HepG2 (cell line): ENCODE measurements at regions of chr4 and their contacts with region 1.

Region 1: DNA sequence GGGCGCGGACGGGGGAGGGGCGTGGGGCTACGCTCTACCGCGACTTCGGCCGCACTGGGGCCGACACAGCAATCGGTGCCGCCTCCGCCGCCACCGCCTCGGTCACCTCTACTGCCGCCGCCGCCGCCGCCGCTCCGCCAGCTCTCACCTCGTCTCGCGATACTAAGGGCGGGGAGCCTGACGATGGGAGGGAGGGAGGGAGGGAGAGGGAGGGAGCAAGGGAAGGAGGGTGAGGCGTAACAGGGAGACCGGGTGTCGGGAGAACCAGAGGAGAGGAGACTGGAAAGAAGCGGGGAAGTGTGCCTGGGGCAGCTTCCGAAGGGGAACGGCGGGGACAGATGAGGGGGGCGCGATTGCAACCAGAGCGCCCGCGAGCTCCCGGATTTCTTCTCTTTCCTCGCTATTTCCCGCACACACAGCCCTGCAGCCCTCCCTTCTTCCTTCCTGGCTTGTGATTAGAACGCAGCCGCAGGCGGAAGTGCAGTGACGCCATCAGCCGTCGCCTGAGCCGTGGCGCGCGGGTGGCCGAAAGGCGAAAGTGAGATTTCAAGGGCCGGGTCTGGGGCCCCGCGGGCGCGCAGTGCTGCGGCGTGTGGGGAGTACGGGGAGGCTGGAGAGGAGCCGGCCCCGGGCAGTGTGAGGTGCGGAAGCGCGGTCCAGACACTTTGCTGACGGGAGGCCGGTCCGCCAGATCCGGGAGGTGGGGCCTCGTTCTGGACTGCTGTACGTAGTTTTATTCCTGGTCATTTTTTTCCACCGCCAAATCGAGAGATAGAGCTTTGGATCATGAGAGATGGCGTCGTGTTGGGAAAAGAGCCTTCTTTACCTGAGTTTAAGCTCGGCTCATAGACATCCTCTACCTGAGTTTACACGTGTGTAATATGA is at the start of gene ANKRD17:
- DNase-seq: peak; percentile 89
- ATAC-seq: peak; percentile 89
- H3K4me3 ChIP-seq: peak within 1 kb of the TSS; percentile 82 to 93 (median 83)
- H3K27ac ChIP-seq: peak within 1 kb of the TSS; percentile 99
- H3K4me1 ChIP-seq: peaks cover 45% of the 10 kb centered on the region
- H3K27me3 ChIP-seq: no peaks in the 10 kb centered on the region; a peak in 1 of 5 replicates
- CTCF ChIP-seq: peak; percentile 26; the same call in 1 of the 2 replicates
- EP300 ChIP-seq: peak in 1 of 2 experiments; percentile 55; a peak in 1 of 4 replicates
- POLR2A ChIP-seq: peak; percentile 88 to 96
- RAD21 ChIP-seq: peak; percentile 50
- total RNA-seq, gene ANKRD17: 61.1 and 97.9 TPM in 2 replicates

Region 2: GRCh38 chr4:73069338-73070073 is 189.4 kb before region 1 on chr4 and contains the start of gene COX18:
- CTCF ChIA-PET with region 1: no interaction called
- POLR2A ChIA-PET with region 1: interaction called, 20 read pairs
- in situ Hi-C with region 1: no loop called
- intact Hi-C with region 1: loop called (anchors 2 kb)
- DNase-seq: peak; percentile 95
- ATAC-seq: peak; percentile 91
- H3K4me3 ChIP-seq: peak within 1 kb of the TSS; percentile 79 to 83 (median 81)
- H3K27ac ChIP-seq: peak within 1 kb of the TSS; percentile 95
- H3K4me1 ChIP-seq: peaks cover 23% of the 10 kb centered on the region
- H3K27me3 ChIP-seq: no peaks in the 10 kb centered on the region; a peak in 1 of 5 replicates
- CTCF ChIP-seq: peak; percentile 29; the same call in 1 of the 2 replicates
- EP300 ChIP-seq: 0 out of 4 replicates have a peak, but pooled peaks of 1 of the 2 experiments have one; percentile 15
- POLR2A ChIP-seq: peak; percentile 93 to 95
- RAD21 ChIP-seq: peak; percentile 72; the same call in 1 of the 2 replicates
- total RNA-seq, gene COX18: 21.3 and 25.3 TPM in 2 replicates

Region 3: GRCh38 chr4:73103799-73104503 is 155.0 kb before region 1 on chr4:
- CTCF ChIA-PET with region 1: no interaction called
- POLR2A ChIA-PET with region 1: interaction called, 13 read pairs
- in situ Hi-C with region 1: no loop called
- intact Hi-C with region 1: no loop called
- DNase-seq: peak; percentile 93
- ATAC-seq: peak; percentile 90
- H3K4me3 ChIP-seq: peak overlapping the region; percentile 30 to 62 (median 59)
- H3K27ac ChIP-seq: peak overlapping the region; percentile 83
- H3K4me1 ChIP-seq: peaks cover 31% of the 10 kb centered on the region
- H3K27me3 ChIP-seq: no peaks in the 10 kb centered on the region
- CTCF ChIP-seq: no peak
- EP300 ChIP-seq: peak in 1 of 2 experiments; percentile 48; a peak in 1 of 4 replicates
- POLR2A ChIP-seq: peak; percentile 59 to 75
- RAD21 ChIP-seq: no peak

Region 4: DNA sequence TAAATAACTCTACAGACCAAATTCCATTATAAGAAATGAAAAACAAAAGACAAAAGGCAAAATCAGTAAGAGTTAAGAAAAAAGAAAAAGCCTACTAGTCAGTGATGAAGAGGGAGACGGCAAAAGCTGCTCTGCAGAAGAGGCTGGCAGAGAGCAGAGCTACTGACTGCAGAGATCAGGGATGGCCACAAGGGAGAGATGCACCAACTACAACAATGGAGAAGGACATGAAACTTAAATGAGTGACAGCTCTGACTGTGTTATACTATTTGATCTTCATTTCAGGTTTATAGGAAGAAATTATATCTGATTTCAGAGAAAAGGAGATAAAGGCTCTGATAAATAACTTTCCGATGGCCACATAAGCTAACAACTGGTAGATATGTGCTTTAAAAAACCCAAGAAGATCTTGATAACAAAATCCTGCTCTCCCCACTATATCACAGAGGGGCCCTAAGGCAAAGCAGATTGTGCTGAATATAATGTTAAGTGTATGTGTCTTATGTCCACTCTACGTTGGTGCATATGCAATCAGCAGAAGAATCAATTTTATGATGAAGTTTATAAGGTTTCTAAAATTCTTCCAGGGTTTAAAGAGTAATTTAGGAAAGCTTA is 131.0 kb before region 1 on chr4:
- CTCF ChIA-PET with region 1: no interaction called
- POLR2A ChIA-PET with region 1: no interaction called
- in situ Hi-C with region 1: loop called (anchors 10 kb)
- intact Hi-C with region 1: no loop called
- DNase-seq: peak; percentile 9
- ATAC-seq: peak; percentile 96
- H3K4me3 ChIP-seq: no peak overlapping the region
- H3K27ac ChIP-seq: no peak overlapping the region
- H3K4me1 ChIP-seq: no peaks in the 10 kb centered on the region
- H3K27me3 ChIP-seq: no peaks in the 10 kb centered on the region
- CTCF ChIP-seq: no peak
- EP300 ChIP-seq: no peak
- POLR2A ChIP-seq: no peak
- RAD21 ChIP-seq: no peak

Region 5: GRCh38 chr4:73828956-73829355 is 570.0 kb after region 1 on chr4:
- CTCF ChIA-PET with region 1: no interaction called
- POLR2A ChIA-PET with region 1: no interaction called
- in situ Hi-C with region 1: no loop called
- intact Hi-C with region 1: no loop called
- DNase-seq: no peak
- ATAC-seq: no peak
- H3K4me3 ChIP-seq: no peak overlapping the region
- H3K27ac ChIP-seq: no peak overlapping the region
- H3K4me1 ChIP-seq: peaks cover 8% of the 10 kb centered on the region; the same call in 1 of the 2 replicates
- H3K27me3 ChIP-seq: no peaks in the 10 kb centered on the region
- CTCF ChIP-seq: no peak
- EP300 ChIP-seq: no peak
- POLR2A ChIP-seq: no peak
- RAD21 ChIP-seq: no peak